Activated B cell treated with CpG ODN at 0.5 μM for 24 hours (primary cell): ENCODE measurements at regions of chr2 and their contacts with region 1.

Region 1: DNA sequence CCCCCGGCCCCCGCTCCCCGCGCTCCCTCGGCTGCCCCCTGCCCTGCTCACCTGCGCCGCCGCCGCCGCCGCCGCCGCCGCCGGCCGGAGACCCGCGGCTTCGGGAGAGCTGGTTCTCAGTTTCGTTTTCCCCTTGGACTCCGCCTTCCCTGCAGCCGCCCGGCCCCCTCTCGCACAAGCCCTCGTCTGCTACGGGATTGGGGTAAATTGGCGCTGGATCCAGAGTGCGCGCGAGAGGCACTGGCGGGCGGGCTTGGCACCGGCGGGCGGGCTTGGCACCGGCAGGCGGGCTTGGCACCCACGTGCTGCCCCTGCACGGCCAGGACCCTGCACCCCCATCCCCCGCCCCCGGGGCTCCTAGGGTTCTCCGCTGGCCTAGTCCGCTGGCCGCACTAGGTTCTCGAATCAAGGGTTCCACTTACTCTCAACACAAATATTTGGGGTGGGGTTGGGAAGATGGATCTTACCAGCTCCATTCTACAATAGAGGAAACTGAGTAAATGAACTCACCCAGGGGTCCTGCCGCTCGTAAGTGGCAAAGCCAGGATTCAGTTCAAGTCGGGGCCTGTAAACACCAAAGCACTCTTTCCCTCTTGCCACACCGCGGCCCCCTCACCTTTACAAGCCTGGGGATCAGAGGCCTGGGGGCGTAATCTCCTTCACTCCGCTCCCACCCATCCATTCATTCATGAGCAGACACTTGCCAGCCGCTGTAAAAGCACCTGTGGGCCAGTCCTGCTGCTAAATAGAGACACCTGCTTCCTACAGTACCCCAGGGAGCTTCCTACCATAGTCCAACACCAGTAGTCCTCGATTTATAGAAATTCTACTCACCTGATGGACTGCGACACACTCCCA is at the start of gene EIF2AK2:
- DNase-seq: peak; percentile 70
- ATAC-seq: peak; percentile 92
- H3K4me3 Mint-ChIP-seq: peak within 1 kb of the TSS; percentile 89
- H3K27ac Mint-ChIP-seq: peak within 1 kb of the TSS; percentile 86
- H3K4me1 Mint-ChIP-seq: peaks cover 40% of the 10 kb centered on the region
- H3K27me3 Mint-ChIP-seq: no peaks in the 10 kb centered on the region
- CTCF ChIP-seq: no peak
- total RNA-seq, gene EIF2AK2: 37.0 and 39.9 TPM in 2 replicates

Region 2: DNA sequence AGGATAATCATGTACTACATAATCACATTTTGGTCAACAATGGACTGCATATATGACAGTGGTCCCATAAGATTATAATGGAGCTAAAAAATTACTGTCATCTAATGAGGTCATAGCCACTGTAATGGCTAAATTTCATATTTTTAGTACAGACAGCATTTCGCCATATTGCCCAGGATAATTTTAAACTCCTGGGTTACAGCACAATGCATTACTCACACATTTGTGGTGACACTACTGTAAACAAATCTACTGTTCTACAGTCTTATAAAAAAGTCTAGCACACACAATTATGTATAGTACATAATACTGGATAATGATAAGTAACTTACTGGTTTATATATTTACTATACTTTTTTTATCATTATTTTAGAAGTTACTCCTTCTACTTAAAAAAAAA is 13.1 kb before region 1 on chr2:
- CTCF ChIA-PET with region 1: no interaction called
- POLR2A ChIA-PET with region 1: no interaction called
- intact Hi-C with region 1: no loop called
- DNase-seq: no peak
- ATAC-seq: no peak
- H3K4me3 Mint-ChIP-seq: no peak overlapping the region
- H3K27ac Mint-ChIP-seq: no peak overlapping the region
- H3K4me1 Mint-ChIP-seq: peaks cover 4% of the 10 kb centered on the region
- H3K27me3 Mint-ChIP-seq: no peaks in the 10 kb centered on the region
- CTCF ChIP-seq: no peak

Region 3: GRCh38 chr2:37196320-37197195 is 39.5 kb after region 1 on chr2 and contains the start of gene CEBPZOS:
- CTCF ChIA-PET with region 1: no interaction called
- POLR2A ChIA-PET with region 1: interaction called, 4 read pairs
- intact Hi-C with region 1: loop called (anchors 5 kb)
- DNase-seq: peak; percentile 87
- ATAC-seq: peak; percentile 90
- H3K4me3 Mint-ChIP-seq: peak within 1 kb of the TSS; percentile 99
- H3K27ac Mint-ChIP-seq: peak within 1 kb of the TSS; percentile 98
- H3K4me1 Mint-ChIP-seq: peaks cover 23% of the 10 kb centered on the region
- H3K27me3 Mint-ChIP-seq: no peaks in the 10 kb centered on the region
- CTCF ChIP-seq: no peak
- total RNA-seq, gene CEBPZOS: 29.2 and 35.5 TPM in 2 replicates